ENCODE measurements at regions of chr2 and their contacts with region 1.

Region 1: GRCh38 chr2:182291296-182291695 is 135.5 kb downstream of the PDE1A start:
- DNase-seq: no peak
- H3K4me3 ChIP-seq: no peak overlapping the region
- H3K27ac ChIP-seq: no peak overlapping the region
- H3K4me1 ChIP-seq: no peaks in the 10 kb centered on the region
- H3K27me3 ChIP-seq: no peaks in the 10 kb centered on the region
- CTCF ChIP-seq: no peak

Region 2: GRCh38 chr2:182426082-182426917 is 135.0 kb after region 1 on chr2:
- CTCF ChIA-PET with region 1: no interaction called
- POLR2A ChIA-PET with region 1: no interaction called
- intact Hi-C with region 1: no loop called
- DNase-seq: no peak
- H3K4me3 ChIP-seq: no peak overlapping the region
- H3K27ac ChIP-seq: no peak overlapping the region
- H3K4me1 ChIP-seq: no peaks in the 10 kb centered on the region
- H3K27me3 ChIP-seq: no peaks in the 10 kb centered on the region
- CTCF ChIP-seq: no peak

Region 3: DNA sequence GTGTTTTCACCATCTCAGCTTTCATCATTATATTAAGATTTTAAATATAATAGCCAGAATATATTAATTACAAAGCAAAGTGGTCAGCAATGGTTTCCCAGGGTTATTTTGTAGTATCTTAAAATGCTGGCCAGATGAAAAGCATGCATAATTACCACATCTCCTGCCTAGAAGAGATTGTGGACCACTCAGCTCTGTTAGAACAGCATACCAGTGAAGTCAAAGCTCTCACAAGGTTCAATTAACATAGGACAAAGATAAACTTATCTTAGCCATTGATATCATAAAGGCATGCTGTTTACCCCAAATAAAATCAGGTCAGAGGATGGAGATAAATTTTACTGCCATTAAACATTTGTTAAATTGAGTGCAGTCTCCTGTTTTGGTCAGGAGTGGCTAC is 154.8 kb after region 1 on chr2:
- CTCF ChIA-PET with region 1: no interaction called
- POLR2A ChIA-PET with region 1: interaction called, 10 read pairs
- intact Hi-C with region 1: no loop called
- DNase-seq: no peak
- H3K4me3 ChIP-seq: no peak overlapping the region
- H3K27ac ChIP-seq: no peak overlapping the region
- H3K4me1 ChIP-seq: no peaks in the 10 kb centered on the region
- H3K27me3 ChIP-seq: no peaks in the 10 kb centered on the region
- CTCF ChIP-seq: no peak